A673 (cell line): ENCODE measurements at regions of chr6 and their contacts with region 1.

Region 1: GRCh38 chr6:144215932-144216667 is 65.8 kb downstream of the STX11 start:
- DNase-seq: peak; percentile 97
- H3K4me3 ChIP-seq: peak overlapping the region; percentile 65
- H3K27ac ChIP-seq: peak overlapping the region; percentile 94
- H3K4me1 ChIP-seq: no peaks in the 10 kb centered on the region
- H3K27me3 ChIP-seq: no peaks in the 10 kb centered on the region
- CTCF ChIP-seq: peak; percentile 77

Region 2: DNA sequence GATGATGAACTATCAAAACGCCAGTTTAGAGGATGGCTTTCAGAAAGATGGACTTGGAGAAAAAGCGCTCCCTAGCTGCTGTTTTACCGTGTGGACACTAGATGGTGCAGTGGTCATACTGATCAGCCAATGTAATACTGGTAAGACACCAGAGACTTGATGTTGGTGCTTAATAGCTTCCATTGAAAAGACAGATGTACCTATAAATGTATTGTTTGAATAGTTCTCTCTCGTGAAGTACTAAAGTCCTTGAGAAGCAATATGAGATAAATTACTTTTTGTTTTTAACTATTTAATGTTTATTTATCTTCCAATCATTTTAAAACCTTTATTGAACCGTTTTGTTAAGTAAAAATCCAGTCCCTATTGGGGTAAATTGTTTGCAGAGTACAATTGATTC is 640.7 kb before region 1 on chr6:
- CTCF ChIA-PET with region 1: no interaction called
- POLR2A ChIA-PET with region 1: no interaction called
- intact Hi-C with region 1: loop called (anchors 10 kb)
- DNase-seq: peak; percentile 74
- H3K4me3 ChIP-seq: no peak overlapping the region
- H3K27ac ChIP-seq: no peak overlapping the region
- H3K4me1 ChIP-seq: no peaks in the 10 kb centered on the region
- H3K27me3 ChIP-seq: no peaks in the 10 kb centered on the region
- CTCF ChIP-seq: peak; percentile 88

Region 3: DNA sequence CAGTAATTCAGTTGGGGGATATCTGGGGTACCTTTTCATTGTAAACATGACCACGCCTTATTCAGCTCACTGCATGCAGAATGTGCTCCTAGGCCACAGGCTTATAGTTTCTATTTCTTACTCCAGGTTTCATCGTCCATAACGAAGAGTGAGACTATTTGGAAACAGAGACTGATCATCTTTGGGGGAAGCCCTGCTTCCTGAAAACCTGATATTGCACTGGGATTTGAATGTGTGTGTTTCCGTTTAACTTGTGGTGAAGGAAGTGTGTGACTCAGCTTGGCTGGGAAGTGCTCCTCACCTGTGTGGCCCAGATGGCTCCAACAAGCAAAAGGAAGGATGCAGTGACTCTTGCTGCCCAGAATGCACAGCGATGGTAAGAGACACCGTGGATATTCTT is 392.6 kb before region 1 on chr6:
- CTCF ChIA-PET with region 1: no interaction called
- POLR2A ChIA-PET with region 1: no interaction called
- intact Hi-C with region 1: no loop called
- DNase-seq: no peak
- H3K4me3 ChIP-seq: no peak overlapping the region
- H3K27ac ChIP-seq: no peak overlapping the region
- H3K4me1 ChIP-seq: no peaks in the 10 kb centered on the region
- H3K27me3 ChIP-seq: no peaks in the 10 kb centered on the region
- CTCF ChIP-seq: no peak

Region 4: GRCh38 chr6:144063744-144064401 is 152.2 kb before region 1 on chr6:
- CTCF ChIA-PET with region 1: no interaction called
- POLR2A ChIA-PET with region 1: no interaction called
- intact Hi-C with region 1: no loop called
- DNase-seq: peak; percentile 64
- H3K4me3 ChIP-seq: peak overlapping the region; percentile 59
- H3K27ac ChIP-seq: no peak overlapping the region
- H3K4me1 ChIP-seq: peaks cover 3% of the 10 kb centered on the region
- H3K27me3 ChIP-seq: peaks cover 69% of the 10 kb centered on the region
- CTCF ChIP-seq: peak; percentile 36; the same call in 1 of the 2 replicates

Region 5: DNA sequence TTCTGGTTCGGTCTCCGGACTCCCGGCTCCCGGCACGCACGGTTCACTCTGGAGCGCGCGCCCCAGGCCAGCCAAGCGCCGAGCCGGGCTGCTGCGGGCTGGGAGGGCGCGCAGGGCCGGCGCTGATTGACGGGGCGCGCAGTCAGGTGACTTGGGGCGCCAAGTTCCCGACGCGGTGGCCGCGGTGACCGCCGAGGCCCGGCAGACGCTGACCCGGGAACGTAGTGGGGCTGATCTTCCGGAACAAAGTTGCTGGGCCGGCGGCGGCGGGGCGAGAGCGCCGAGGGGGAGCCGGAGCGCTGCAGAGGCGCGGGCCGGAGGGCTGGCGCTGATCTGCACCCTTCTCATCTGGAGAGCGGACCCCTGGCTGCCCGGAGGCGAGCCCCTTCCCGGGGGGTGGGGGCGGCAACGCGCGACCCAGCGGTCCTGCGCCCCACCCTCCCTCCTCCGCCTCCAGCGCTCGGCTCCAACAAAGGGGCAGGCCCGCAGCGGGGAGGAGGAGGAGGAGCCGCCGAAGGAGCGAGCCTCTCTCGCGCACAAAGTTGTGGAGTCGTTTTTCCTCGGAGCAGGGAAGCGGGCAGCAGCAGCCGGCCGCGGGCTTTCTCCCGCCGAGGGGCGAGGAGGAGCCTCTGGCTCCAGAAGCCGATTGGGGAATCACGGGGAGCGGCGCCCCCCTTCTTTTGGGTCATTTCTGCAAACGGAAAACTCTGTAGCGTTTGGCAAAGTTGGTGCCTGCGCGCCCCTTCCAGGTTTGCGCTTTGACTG is 68.9 kb after region 1 on chr6 and contains the start of gene UTRN:
- CTCF ChIA-PET with region 1: no interaction called
- POLR2A ChIA-PET with region 1: no interaction called
- intact Hi-C with region 1: loop called (anchors 1 kb)
- DNase-seq: peak; percentile 89
- H3K4me3 ChIP-seq: peak within 1 kb of the TSS; percentile 87
- H3K27ac ChIP-seq: peak within 1 kb of the TSS; percentile 83
- H3K4me1 ChIP-seq: no peaks in the 10 kb centered on the region
- H3K27me3 ChIP-seq: no peaks in the 10 kb centered on the region
- CTCF ChIP-seq: peak; percentile 14; the same call in 1 of the 2 replicates
- total RNA-seq, gene UTRN: 75.2 and 82.8 TPM in 2 replicates

Region 6: DNA sequence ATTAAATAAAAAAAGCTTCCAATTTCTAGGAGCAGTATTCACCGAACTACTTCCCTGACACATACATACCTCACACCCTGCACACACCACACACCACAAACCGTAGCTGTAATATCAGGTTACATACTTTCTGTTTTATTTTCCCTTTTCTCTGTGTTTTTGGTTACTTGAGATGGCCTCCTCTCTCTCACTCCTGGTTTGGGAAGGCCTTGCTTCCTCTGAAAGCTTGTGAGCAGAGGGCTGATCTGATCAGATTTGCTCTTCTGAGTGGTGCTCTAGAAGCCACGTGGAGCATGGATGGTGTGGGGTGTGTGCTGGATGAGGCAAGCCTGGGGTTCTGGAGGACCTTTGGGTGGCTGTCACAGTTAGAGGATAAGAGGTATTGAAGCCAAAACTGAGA is 89.9 kb after region 1 on chr6:
- CTCF ChIA-PET with region 1: no interaction called
- POLR2A ChIA-PET with region 1: no interaction called
- intact Hi-C with region 1: no loop called
- DNase-seq: no peak
- H3K4me3 ChIP-seq: no peak overlapping the region
- H3K27ac ChIP-seq: no peak overlapping the region
- H3K4me1 ChIP-seq: no peaks in the 10 kb centered on the region
- H3K27me3 ChIP-seq: no peaks in the 10 kb centered on the region
- CTCF ChIP-seq: no peak

Region 7: GRCh38 chr6:144343701-144344428 is 127.8 kb after region 1 on chr6:
- CTCF ChIA-PET with region 1: no interaction called
- POLR2A ChIA-PET with region 1: no interaction called
- intact Hi-C with region 1: loop called (anchors 5 kb)
- DNase-seq: peak; percentile 83
- H3K4me3 ChIP-seq: peak overlapping the region; percentile 16
- H3K27ac ChIP-seq: peak overlapping the region; percentile 72
- H3K4me1 ChIP-seq: peaks cover 70% of the 10 kb centered on the region
- H3K27me3 ChIP-seq: no peaks in the 10 kb centered on the region
- CTCF ChIP-seq: no peak

Region 8: DNA sequence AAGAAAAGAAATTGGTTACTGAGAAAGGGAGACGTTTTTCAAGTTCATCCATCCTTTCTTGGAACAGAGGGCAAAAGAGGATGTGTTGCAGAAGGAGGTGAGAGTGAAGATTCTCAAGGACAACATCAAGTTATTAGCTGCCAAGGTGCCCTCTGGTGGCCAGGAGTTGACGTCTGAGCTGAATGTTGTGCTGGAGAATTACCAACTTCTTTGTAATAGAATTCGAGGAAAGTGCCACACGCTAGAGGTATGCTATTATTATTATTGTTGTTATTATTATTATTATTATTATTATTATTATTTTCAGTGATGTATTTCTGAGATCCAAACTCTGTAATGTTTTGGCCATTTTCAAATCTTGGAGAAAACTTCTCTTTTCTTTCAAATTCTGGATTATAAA is 266.0 kb after region 1 on chr6:
- CTCF ChIA-PET with region 1: interaction called, 5 read pairs
- POLR2A ChIA-PET with region 1: no interaction called
- intact Hi-C with region 1: loop called (anchors 1 kb)
- DNase-seq: peak; percentile 86
- H3K4me3 ChIP-seq: no peak overlapping the region
- H3K27ac ChIP-seq: no peak overlapping the region
- H3K4me1 ChIP-seq: no peaks in the 10 kb centered on the region
- H3K27me3 ChIP-seq: no peaks in the 10 kb centered on the region
- CTCF ChIP-seq: peak; percentile 80